ENCODE measurements at regions of chr11 and their contacts with region 1.

Region 1: GRCh38 chr11:77047007-77047927 is 13.1 kb downstream of the B3GNT6 start:
- DNase-seq: peak; percentile 94
- H3K4me3 Mint-ChIP-seq: peak overlapping the region; percentile 69
- H3K27ac Mint-ChIP-seq: peak overlapping the region; percentile 29
- H3K4me1 Mint-ChIP-seq: peaks cover 7% of the 10 kb centered on the region
- H3K27me3 Mint-ChIP-seq: peaks cover 22% of the 10 kb centered on the region

Region 2: GRCh38 chr11:76734456-76735420 is 312.5 kb before region 1 on chr11:
- intact Hi-C with region 1: loop called (anchors 5 kb)
- DNase-seq: no peak
- H3K4me3 Mint-ChIP-seq: no peak overlapping the region
- H3K27ac Mint-ChIP-seq: no peak overlapping the region
- H3K4me1 Mint-ChIP-seq: no peaks in the 10 kb centered on the region
- H3K27me3 Mint-ChIP-seq: no peaks in the 10 kb centered on the region

Region 3: DNA sequence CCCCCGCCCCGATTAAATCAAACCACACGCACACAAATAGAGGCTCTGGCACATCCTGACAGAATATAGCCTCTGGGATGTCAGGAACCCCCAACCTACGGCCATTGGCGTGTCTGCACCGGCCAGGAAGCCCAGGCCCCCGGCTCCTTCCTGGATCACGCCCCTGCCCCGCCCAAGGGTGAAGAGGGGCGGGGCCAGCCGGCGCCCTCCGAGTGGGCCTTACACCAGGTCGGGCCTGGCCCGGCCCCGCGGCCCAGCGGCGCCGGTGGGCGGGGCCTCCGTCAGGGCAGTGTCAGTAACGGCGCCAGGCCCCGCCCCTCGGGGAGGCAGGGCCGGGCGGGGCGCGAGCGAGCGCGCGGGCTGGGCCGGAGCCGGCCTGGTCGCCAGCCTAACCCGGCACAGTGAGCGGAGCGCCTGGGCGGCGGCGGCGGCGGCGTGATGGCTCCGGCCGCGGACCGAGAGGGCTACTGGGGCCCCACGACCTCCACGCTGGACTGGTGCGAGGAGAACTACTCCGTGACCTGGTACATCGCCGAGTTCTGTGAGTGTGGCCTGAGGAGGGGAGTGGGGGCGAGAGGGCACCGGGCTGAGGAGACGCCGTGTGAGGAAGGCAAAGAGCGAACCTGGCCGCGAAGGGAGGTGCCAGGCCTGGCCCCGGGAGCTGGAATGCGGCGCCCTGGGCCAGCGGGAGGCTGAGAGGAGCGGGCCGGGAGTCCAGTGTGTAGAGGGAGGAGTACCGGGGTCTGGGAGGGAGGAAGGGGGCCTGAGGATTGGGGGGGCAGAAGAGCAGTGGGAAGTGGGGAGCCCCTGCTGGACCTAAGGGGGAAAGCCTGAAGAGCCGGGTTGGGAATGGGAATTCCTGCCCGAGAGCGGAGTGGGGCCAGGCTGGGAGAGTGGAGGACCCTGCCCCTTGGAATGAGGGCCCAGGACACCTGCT is 186.5 kb before region 1 on chr11 and contains the start of gene ACER3:
- intact Hi-C with region 1: loop called (anchors 5 kb)
- DNase-seq: peak; percentile 97
- H3K4me3 Mint-ChIP-seq: peak within 1 kb of the TSS; percentile 90
- H3K27ac Mint-ChIP-seq: peak within 1 kb of the TSS; percentile 84
- H3K4me1 Mint-ChIP-seq: peaks cover 19% of the 10 kb centered on the region
- H3K27me3 Mint-ChIP-seq: no peaks in the 10 kb centered on the region
- total RNA-seq, gene ACER3: 12.5 and 13.8 TPM in 2 replicates

Region 4: DNA sequence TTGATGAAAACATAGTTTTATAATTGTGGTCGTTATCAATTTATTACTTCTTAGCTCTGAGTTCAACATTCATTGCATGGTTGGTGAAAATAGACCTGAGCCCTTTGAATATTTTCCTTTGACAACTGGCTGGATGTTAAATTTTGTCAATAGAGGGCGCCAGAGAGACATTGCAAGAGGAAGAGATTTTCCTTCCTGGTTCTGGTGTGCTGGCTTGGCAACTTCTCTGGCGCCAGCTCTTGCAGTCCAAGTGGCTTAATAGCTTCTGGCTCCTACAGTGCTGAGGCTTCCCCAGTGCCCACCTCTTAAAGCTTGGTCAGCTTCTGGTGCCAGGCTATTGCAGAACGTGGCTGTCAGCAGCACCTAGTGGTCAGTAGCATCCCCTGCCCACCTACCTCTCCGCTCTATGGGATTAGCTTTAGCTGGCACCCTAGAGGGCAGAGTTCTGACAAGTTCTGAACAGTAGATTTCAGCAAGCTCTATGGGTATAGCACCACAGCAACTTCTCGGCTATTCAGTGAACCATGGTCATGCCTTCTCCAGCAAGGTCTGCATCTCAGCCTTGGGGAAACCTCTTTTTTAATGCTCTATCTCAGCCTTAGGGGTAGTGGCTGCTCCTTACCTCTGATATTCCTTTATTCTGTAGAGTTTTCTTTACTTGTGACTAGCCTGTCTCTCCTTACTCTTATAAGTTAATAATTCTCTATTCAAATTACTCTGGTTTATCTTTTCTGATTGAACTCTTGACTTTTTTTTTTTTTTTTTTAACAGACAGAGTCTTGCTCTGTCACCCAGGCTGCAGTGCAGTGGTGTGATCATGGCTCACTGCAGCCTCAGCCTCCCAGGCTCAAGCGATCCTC is 127.2 kb before region 1 on chr11:
- intact Hi-C with region 1: loop called (anchors 5 kb)
- DNase-seq: peak; percentile 91
- H3K4me3 Mint-ChIP-seq: peak overlapping the region; percentile 34
- H3K27ac Mint-ChIP-seq: no peak overlapping the region
- H3K4me1 Mint-ChIP-seq: peaks cover 6% of the 10 kb centered on the region
- H3K27me3 Mint-ChIP-seq: peaks cover 7% of the 10 kb centered on the region

Region 5: GRCh38 chr11:77066229-77067042 is 19.2 kb after region 1 on chr11 and contains the start of gene CAPN5:
- intact Hi-C with region 1: loop called (anchors 1 kb)
- DNase-seq: peak; percentile 96
- H3K4me3 Mint-ChIP-seq: peak within 1 kb of the TSS; percentile 88
- H3K27ac Mint-ChIP-seq: peak within 1 kb of the TSS; percentile 87
- H3K4me1 Mint-ChIP-seq: peaks cover 8% of the 10 kb centered on the region
- H3K27me3 Mint-ChIP-seq: peaks cover 21% of the 10 kb centered on the region
- total RNA-seq, gene CAPN5: 0.30 TPM in 1 of 2 replicates, not detected in the other

Region 6: GRCh38 chr11:77091146-77091940 is 44.1 kb after region 1 on chr11:
- intact Hi-C with region 1: loop called (anchors 1 kb)
- DNase-seq: peak; percentile 94
- H3K4me3 Mint-ChIP-seq: no peak overlapping the region
- H3K27ac Mint-ChIP-seq: no peak overlapping the region
- H3K4me1 Mint-ChIP-seq: peaks cover 5% of the 10 kb centered on the region
- H3K27me3 Mint-ChIP-seq: no peaks in the 10 kb centered on the region

Region 7: DNA sequence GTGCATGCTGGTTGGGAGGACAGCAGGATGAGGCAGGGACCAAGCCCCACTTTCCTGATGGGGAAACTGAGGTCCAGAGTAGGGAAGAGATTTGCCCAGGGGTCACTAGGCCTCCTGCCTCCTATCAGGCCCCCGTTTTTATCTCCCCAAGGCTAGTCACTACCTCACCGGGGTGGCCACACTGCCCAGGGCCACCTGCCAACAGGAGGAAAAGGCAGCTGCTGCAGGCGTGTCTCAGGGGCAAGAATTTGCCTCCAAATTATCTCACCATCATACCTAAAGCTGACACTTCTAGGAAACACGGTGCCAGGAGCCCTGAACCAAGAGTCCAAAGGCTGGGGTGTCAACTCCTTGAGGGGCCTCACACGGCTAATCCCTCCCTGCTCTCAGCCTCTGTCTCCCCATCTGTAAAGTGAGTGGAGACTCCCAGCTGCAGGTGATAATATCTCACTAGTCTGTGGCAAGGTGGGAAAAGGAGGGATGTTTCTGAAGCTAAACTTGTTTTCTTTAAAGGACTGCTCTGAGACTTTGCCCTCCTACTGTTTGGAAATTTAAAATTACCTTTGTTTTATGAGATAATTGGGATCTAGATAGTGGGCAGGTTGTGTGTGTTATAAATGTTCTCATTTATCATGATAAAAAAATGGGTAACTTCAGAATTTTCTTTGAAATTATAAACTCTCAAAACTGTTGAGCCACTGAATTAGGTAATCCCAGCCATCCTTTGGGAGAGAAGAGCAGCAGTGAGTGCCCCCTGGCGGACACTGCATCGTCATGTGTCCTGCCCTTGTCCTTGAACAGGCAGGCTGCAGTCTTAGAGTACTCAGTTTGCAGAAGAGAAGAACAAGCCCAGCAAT is 140.7 kb after region 1 on chr11:
- intact Hi-C with region 1: loop called (anchors 1 kb)
- DNase-seq: peak; percentile 90
- H3K4me3 Mint-ChIP-seq: no peak overlapping the region
- H3K27ac Mint-ChIP-seq: no peak overlapping the region
- H3K4me1 Mint-ChIP-seq: no peaks in the 10 kb centered on the region
- H3K27me3 Mint-ChIP-seq: no peaks in the 10 kb centered on the region

Measured in activated CD4-positive, alpha-beta T cell treated with anti-CD3 and anti-CD28 coated beads, Interleukin-2, amount 10 ng/mL, durations not matched to agents 24 days and 14 days (primary cell).